ENCODE measurements at regions of chr11 and their contacts with region 1.

Region 1: DNA sequence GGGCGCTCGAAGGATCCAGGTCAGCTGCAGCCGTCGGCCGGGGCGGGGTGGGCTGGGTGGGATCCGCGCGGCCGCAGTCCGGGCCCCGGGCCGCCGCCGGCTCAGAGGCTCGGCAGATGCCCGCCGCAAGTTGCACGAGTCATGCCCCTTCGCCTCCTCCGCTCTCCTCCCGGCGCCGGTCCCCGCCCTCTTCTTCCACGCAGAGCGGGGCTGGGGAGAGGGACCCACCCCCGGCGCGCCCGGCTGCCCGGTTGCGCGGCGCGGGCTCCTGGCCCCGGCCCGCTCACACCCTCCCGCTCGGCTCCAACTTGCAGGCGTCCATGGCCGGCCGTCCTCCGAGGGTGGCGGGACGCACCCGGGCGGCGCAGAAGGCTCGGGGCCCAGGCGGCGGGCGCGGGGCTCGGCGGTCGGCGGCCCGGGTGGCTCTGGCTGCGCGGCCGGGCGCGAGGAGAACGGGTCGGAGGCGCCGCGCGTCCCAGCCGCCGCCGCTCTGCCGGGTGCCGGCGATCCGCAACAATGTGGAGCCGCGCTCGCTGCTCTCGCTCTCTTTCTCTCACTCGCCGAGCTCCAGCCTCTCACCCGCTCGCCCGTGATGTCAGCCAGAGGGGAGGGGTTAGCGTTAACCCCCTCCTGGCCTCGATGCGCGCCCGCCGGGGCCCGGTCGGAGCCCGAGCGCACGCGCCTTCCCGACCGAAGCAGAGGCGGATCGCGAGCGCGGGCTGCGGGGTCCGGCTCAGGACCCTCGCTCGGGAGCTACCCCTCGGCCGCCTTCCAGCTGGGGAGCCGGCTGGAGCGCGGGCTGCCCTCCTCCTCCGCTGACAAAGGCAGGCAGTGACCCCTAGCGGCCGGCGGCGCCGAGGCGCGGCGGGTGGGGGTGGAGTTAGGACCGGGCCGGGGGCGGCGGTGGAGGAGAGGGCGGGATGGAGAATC is at the start of gene NECTIN1:
- DNase-seq: peak; percentile 46
- H3K4me3 ChIP-seq: peak within 1 kb of the TSS; percentile 68 to 95 (median 86)
- H3K27ac ChIP-seq: peak within 1 kb of the TSS; percentile 93 to 98 (median 98)
- H3K4me1 ChIP-seq: peaks cover 12 to 58% (median 26%) of the 10 kb centered on the region in 3 donors
- H3K27me3 ChIP-seq: no peaks in the 10 kb centered on the region
- CTCF ChIP-seq: peak; percentile 78 to 96 (median 88)
- POLR2A ChIP-seq: peak in 3 of 4 donors; percentile 69 to 87 (median 84)
- total RNA-seq, gene NECTIN1: 72.5 to 163 (median 117) TPM

Region 2: DNA sequence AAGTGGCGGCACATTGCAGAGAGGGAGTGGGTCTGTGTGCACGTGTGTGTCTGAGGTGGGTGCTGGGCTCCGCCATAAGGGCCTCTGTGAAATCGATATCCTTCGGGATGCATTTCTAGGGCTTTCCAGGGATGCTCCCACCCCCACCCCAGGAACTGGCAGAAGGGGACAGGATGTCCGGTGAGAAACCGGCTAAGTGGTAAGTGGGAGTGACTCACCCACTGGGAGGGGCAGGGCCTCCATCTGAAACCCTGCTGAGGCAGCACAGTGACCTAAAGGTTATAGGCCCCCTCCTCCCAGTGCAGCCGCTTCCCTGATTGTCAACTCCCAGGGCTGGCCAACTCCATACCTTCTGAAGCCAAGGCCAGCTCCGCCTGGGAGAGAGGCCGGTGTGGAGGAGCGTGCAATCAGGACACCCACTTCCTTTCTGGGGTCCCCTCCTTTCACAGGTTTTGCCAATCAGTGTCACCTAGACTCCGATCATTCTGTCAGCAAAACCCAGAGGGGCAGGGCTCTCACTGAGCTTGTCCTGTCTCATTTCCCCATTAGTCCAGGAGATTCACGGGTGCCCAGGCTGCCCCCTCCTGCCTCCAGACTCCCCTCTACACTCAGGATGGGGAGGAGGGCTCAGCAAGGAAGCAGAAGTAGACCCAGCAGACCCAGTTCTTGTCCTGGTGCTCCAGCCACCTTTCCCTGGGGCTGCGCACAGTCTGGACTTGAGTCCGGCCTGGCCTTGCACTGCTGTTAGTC is 44.4 kb before region 1 on chr11:
- intact Hi-C with region 1: loop called (anchors 5 kb)
- DNase-seq: no peak
- H3K4me3 ChIP-seq: peak overlapping the region in 1 of 4 donors; percentile 23
- H3K27ac ChIP-seq: peak overlapping the region; percentile 89 to 98 (median 94)
- H3K4me1 ChIP-seq: peaks cover 76 to 100% (median 86%) of the 10 kb centered on the region in 3 donors
- H3K27me3 ChIP-seq: no peaks in the 10 kb centered on the region
- CTCF ChIP-seq: no peak
- POLR2A ChIP-seq: no peak